ENCODE measurements at regions of chr10 and their contacts with region 1.

Region 1: GRCh38 chr10:118504044-118504874 is 91.2 kb downstream of the PRLHR start:
- DNase-seq: peak; percentile 91
- H3K4me3 ChIP-seq: no peak overlapping the region
- H3K27ac ChIP-seq: peak overlapping the region; percentile 87
- H3K4me1 ChIP-seq: peaks cover 41% of the 10 kb centered on the region
- H3K27me3 ChIP-seq: no peaks in the 10 kb centered on the region
- CTCF ChIP-seq: no peak

Region 2: DNA sequence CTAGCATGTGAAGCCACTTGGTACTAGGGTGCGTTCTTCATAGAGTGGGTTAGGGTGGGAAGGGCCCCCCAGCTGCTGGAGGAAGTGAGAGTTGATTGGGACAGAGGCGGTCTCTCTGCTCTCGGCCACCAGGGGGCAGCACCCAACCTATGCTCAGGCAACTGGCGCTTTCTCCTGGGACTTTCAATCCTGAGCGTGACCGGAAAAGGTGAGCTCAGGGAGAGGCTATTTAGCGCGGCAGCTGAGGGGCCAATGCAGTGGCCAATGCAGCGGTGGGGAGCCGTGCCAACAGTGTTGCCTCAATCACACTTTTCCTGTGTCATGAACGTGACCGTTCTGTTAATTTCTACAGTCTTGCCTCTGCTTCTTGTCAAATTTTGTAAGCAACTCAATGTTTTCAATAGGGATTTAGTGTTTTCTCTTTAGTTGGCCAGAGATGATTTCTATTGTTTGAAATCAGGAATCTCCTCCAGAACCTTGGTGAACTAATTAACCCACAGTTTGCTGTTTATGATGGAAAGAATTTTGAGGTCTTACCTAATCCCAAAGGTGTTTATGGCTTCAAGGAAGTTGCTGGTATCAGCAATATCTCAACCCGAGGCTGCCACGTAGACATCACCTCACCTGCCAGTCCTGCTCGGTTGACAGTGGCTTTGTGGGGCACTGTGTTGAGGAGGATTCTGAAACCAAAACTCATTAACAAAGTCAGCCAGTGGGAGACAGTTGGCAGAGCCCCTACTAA is 1061.1 kb before region 1 on chr10:
- CTCF ChIA-PET with region 1: no interaction called
- dilution Hi-C with region 1: no loop called
- in situ Hi-C with region 1: no loop called
- intact Hi-C with region 1: loop called (anchors 2 kb)
- DNase-seq: peak; percentile 78
- H3K4me3 ChIP-seq: no peak overlapping the region
- H3K27ac ChIP-seq: peak overlapping the region; percentile 62
- H3K4me1 ChIP-seq: peaks cover 42% of the 10 kb centered on the region
- H3K27me3 ChIP-seq: no peaks in the 10 kb centered on the region
- CTCF ChIP-seq: peak; percentile 79 to 84

Region 3: DNA sequence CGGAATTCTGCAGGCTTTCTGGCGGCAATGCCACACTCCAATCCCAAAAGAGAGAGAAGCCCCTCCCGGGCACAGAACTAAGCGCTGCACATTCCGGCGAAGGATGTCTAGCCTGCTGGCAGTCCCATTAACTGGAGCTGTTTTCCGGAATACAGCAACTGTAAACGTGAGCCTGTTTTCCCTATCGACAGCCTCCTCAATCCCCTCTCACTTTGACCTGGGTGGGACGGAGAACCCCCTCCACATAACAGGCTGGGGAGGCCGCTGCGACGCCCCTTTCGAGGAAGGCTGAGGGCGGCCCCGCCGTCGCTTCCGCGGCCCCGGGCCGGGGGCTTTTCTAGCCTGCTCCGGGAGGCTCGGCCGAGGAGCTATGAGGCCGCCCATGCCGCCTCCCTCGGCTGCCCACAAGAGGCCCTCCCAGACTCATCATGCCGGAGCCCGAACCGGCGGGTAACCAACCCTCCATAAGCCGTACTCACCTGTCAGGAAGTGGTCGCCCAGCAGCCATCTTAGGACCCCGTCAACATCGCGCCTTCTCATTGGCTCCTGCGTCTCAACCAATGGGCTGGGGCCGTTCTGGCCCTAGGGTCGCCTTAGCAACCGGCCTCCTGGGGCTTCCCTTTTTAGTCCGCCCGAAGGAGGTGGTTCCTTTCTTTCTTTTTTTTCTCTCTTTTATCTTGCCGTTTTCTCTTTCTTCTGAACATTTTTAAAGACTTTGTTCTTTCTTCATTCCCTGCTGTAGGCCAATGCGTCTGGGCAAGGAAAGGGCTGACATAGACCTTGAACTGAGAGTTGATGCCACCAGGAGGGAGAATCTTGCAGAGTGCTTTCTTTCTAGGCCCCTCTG is 162.2 kb before region 1 on chr10 and contains the start of gene FAM204A:
- CTCF ChIA-PET with region 1: no interaction called
- dilution Hi-C with region 1: no loop called
- in situ Hi-C with region 1: no loop called
- intact Hi-C with region 1: loop called (anchors 5 kb)
- DNase-seq: peak; percentile 91
- H3K4me3 ChIP-seq: peak within 1 kb of the TSS; percentile 62 to 87 (median 83)
- H3K27ac ChIP-seq: peak within 1 kb of the TSS; percentile 75
- H3K4me1 ChIP-seq: peaks cover 10% of the 10 kb centered on the region
- H3K27me3 ChIP-seq: no peaks in the 10 kb centered on the region
- CTCF ChIP-seq: no peak
- total RNA-seq, gene FAM204A: 50.3 to 73.2 TPM

Region 4: DNA sequence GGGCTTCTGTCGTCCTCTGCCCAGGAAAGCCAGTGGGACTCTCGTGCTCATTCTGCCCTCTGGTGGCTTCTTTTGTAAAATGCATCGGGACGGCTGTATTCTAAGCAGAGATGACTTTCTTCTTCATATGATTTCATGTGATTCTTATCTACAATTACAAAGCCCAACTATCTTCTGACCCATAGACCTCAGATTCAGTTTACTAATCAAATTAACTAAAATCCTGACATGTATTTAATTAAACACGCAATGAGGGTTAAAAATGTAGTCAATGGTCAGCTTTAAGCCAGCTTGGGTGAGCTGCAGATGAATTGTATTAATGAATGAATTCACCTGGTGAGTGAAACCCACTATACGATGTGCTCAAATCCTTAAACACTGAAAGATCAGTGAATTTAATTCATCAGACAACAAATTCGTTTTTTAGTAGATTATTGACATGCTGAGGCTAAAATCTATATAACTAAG is 44.5 kb before region 1 on chr10:
- CTCF ChIA-PET with region 1: interaction called, 4 read pairs
- dilution Hi-C with region 1: no loop called
- in situ Hi-C with region 1: no loop called
- intact Hi-C with region 1: loop called (anchors 1 kb)
- DNase-seq: peak; percentile 52
- H3K4me3 ChIP-seq: no peak overlapping the region
- H3K27ac ChIP-seq: no peak overlapping the region
- H3K4me1 ChIP-seq: no peaks in the 10 kb centered on the region
- H3K27me3 ChIP-seq: no peaks in the 10 kb centered on the region
- CTCF ChIP-seq: peak; percentile 67 to 84

Region 5: GRCh38 chr10:118471863-118472262 is 32.4 kb before region 1 on chr10:
- CTCF ChIA-PET with region 1: no interaction called
- dilution Hi-C with region 1: no loop called
- in situ Hi-C with region 1: no loop called
- intact Hi-C with region 1: loop called (anchors 1 kb)
- DNase-seq: peak; percentile 88
- H3K4me3 ChIP-seq: no peak overlapping the region
- H3K27ac ChIP-seq: peak overlapping the region; percentile 92
- H3K4me1 ChIP-seq: peaks cover 25% of the 10 kb centered on the region
- H3K27me3 ChIP-seq: no peaks in the 10 kb centered on the region
- CTCF ChIP-seq: no peak

Region 6: DNA sequence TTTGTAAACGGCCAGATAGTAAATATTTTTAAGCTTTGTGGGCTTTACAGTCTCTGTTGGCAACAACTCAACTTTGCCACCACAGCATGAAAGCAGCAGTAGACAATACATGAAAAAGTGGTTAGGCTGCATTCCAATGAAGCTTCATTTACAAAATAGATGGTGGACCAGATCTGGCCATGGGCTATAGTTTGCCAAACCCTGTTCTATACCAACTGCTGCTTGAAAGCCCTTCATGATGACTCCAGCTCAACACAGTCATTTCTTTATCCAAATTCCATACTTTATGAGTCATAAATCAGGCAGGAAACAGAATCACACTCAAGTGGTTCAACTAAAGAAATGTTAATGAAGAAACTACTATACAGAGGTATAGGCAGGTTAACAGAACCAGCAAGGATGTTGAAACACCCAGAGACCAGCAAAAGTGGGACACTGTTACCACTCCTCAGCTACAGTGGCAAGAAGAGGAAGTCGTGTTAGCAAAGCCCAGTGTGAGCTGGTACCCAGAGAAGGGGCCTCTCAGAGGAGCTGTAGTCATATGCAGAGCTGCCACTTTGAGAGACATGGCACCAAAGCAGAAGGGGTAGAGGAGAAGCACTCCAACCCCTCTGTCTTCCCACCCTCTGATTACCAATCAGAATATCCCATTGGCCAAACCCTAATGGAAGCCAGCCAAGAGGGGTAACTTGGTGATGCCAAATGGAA is 18.7 kb after region 1 on chr10:
- CTCF ChIA-PET with region 1: no interaction called
- dilution Hi-C with region 1: no loop called
- in situ Hi-C with region 1: no loop called
- intact Hi-C with region 1: loop called (anchors 1 kb)
- DNase-seq: peak; percentile 96
- H3K4me3 ChIP-seq: no peak overlapping the region
- H3K27ac ChIP-seq: peak overlapping the region; percentile 84
- H3K4me1 ChIP-seq: peaks cover 31% of the 10 kb centered on the region
- H3K27me3 ChIP-seq: no peaks in the 10 kb centered on the region
- CTCF ChIP-seq: no peak